Activated CD4-positive, alpha-beta T cell treated with anti-CD3 and anti-CD28 coated beads, Interleukin-2, amount 10 ng/mL, durations not matched to agents 7 days and 5 days (primary cell): ENCODE measurements at regions of chr3 and their contacts with region 1.

Region 1: GRCh38 chr3:197029511-197030167 is at the start of gene MELTF:
- DNase-seq: peak; percentile 64
- H3K4me3 Mint-ChIP-seq: peak within 1 kb of the TSS; percentile 70
- H3K27ac Mint-ChIP-seq: peak within 1 kb of the TSS; percentile 60
- H3K4me1 Mint-ChIP-seq: peaks cover 4% of the 10 kb centered on the region
- H3K27me3 Mint-ChIP-seq: peaks cover under 1% of the 10 kb centered on the region
- total RNA-seq, gene MELTF: 4.8 to 6.4 TPM

Region 2: DNA sequence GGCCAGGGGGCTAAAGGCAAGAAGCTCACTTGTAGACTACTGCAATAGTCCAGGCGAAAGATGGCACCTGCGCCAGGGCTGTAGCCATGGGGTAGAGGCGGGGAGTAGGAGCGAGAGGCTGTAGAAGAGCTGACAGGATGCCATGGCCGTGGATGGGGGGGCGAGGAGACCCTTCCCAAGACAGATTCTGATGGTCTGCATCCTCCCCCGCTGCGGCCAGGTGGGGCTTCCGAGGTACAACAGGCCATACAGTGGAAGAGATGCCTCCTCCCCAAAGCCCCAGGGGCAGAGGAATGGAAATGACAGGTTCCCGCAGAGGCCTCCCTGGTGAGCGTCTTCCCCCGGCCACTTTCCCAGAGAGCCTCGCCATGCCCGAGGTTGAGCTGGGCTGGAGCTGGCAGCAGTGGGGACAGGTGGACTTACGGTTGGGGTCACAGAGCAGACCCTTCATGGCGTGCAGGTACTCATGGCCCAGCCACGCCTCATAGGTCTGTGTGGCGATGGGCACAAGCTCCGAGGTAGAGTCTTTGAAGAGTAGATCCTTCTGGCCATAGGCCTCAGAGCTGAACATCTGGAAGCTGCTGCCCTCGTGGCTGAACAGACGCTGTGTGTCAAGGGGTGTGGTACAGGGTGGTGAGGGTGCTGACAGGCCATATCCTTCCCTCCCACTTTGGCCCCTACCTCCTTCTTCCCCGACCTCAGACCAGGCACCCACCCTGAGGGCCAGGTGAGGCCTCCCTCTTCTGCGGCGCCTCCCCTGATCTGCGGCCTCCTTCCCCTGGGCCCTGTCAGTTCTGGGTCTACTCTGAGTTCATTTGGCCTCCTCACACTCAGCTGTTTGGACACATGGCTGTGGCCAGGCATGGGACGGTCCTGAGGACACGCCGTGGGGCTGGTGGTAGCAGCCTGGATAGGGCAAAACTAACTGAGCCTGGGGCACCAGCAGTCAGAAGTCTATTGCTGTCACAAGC is 13.6 kb before region 1 on chr3:
- CTCF ChIA-PET with region 1: interaction called, 26 read pairs
- POLR2A ChIA-PET with region 1: no interaction called
- DNase-seq: no peak
- H3K4me3 Mint-ChIP-seq: no peak overlapping the region
- H3K27ac Mint-ChIP-seq: peak overlapping the region; percentile 64
- H3K4me1 Mint-ChIP-seq: no peaks in the 10 kb centered on the region
- H3K27me3 Mint-ChIP-seq: no peaks in the 10 kb centered on the region

Region 3: DNA sequence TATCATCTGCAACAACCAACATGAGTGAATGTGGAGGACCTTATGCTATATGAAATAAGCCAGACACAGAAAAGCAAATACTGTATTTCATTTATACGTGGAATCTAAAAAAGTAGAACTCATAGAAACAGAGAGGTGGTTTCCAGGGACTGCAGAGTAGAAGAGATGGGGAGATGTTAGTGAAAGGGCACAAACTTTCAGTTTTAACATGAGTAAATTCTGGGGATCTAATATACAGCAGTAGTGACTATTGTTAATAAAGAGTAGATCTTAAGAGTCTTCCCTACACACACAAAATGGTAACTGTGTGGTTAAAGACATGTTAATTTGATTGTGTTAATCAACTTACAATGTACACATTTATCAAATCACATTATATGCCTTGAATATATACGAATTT is 20.9 kb after region 1 on chr3:
- CTCF ChIA-PET with region 1: interaction called, 12 read pairs
- POLR2A ChIA-PET with region 1: no interaction called
- DNase-seq: no peak
- H3K4me3 Mint-ChIP-seq: no peak overlapping the region
- H3K27ac Mint-ChIP-seq: no peak overlapping the region
- H3K4me1 Mint-ChIP-seq: no peaks in the 10 kb centered on the region
- H3K27me3 Mint-ChIP-seq: no peaks in the 10 kb centered on the region

Region 4: GRCh38 chr3:197139586-197139985 is 109.9 kb after region 1 on chr3:
- CTCF ChIA-PET with region 1: no interaction called
- POLR2A ChIA-PET with region 1: no interaction called
- DNase-seq: no peak
- H3K4me3 Mint-ChIP-seq: no peak overlapping the region
- H3K27ac Mint-ChIP-seq: no peak overlapping the region
- H3K4me1 Mint-ChIP-seq: no peaks in the 10 kb centered on the region
- H3K27me3 Mint-ChIP-seq: no peaks in the 10 kb centered on the region

Region 5: DNA sequence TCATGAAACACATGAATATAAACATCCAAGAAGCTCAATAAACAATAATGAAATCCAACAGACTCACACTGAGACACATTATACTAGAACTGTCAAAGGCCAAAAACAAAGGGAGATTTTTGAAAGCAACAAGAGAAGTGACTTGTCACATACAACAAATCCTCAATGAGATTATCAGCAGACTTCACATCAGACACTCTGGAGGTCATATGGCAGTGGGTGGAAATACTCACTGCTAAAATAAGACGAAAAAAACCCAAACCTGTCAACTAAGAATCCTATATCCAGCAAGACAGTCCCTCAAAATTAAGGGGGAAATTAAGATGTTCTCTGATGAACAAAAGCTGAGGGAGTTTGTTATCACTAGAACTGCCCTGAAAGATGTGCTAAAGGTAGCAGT is 125.4 kb after region 1 on chr3:
- CTCF ChIA-PET with region 1: no interaction called
- POLR2A ChIA-PET with region 1: no interaction called
- DNase-seq: no peak
- H3K4me3 Mint-ChIP-seq: no peak overlapping the region
- H3K27ac Mint-ChIP-seq: no peak overlapping the region
- H3K4me1 Mint-ChIP-seq: no peaks in the 10 kb centered on the region
- H3K27me3 Mint-ChIP-seq: no peaks in the 10 kb centered on the region